PC-9 (cell line): ENCODE measurements at regions of chr2 and their contacts with region 1.

Region 1: GRCh38 chr2:158723917-158724690 is 71.0 kb upstream of the DAPL1 start:
- DNase-seq: peak; percentile 71 to 95
- H3K4me3 ChIP-seq: peak overlapping the region; percentile 41; the same call in 1 of the 2 replicates
- H3K27ac ChIP-seq: peak overlapping the region; percentile 80
- H3K4me1 ChIP-seq: peaks cover 40% of the 10 kb centered on the region
- H3K27me3 ChIP-seq: no peaks in the 10 kb centered on the region
- CTCF ChIP-seq: peak; percentile 67

Region 2: DNA sequence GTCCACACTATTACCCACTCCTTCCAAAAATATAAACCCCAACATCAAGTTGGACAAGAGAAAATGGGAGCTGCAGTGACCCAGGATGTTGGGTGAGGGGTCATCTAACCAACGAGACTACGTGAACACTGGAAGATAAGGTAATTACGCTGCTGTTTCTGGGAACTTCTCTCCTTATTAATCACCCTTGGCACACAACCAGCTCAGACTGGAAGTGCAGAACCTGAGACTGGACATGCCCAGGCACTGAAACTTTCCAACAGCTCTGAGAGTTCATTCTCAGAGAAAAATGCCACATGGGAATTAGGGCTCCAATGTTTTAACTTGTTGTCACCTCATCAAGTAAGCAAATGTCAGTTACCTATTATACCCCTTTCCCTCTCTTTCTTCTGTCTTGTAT is 402.8 kb before region 1 on chr2:
- CTCF ChIA-PET with region 1: no interaction called
- POLR2A ChIA-PET with region 1: no interaction called
- intact Hi-C with region 1: no loop called
- DNase-seq: no peak
- H3K4me3 ChIP-seq: no peak overlapping the region
- H3K27ac ChIP-seq: no peak overlapping the region
- H3K4me1 ChIP-seq: no peaks in the 10 kb centered on the region
- H3K27me3 ChIP-seq: no peaks in the 10 kb centered on the region
- CTCF ChIP-seq: no peak

Region 3: GRCh38 chr2:158735820-158736580 is 11.9 kb after region 1 on chr2:
- CTCF ChIA-PET with region 1: interaction called, 10 read pairs
- POLR2A ChIA-PET with region 1: interaction called, 14 read pairs
- intact Hi-C with region 1: no loop called
- DNase-seq: peak in 1 of 2 experiments; percentile 83
- H3K4me3 ChIP-seq: no peak overlapping the region
- H3K27ac ChIP-seq: peak overlapping the region; percentile 76
- H3K4me1 ChIP-seq: peaks cover 32% of the 10 kb centered on the region
- H3K27me3 ChIP-seq: no peaks in the 10 kb centered on the region
- CTCF ChIP-seq: no peak

Region 4: GRCh38 chr2:158745044-158745865 is 21.2 kb after region 1 on chr2:
- CTCF ChIA-PET with region 1: interaction called, 10 read pairs
- POLR2A ChIA-PET with region 1: no interaction called
- intact Hi-C with region 1: no loop called
- DNase-seq: peak in 1 of 2 experiments; percentile 35
- H3K4me3 ChIP-seq: no peak overlapping the region
- H3K27ac ChIP-seq: no peak overlapping the region
- H3K4me1 ChIP-seq: no peaks in the 10 kb centered on the region
- H3K27me3 ChIP-seq: no peaks in the 10 kb centered on the region
- CTCF ChIP-seq: peak; percentile 65

Region 5: GRCh38 chr2:158914731-158915130 is 190.6 kb after region 1 on chr2:
- CTCF ChIA-PET with region 1: no interaction called
- POLR2A ChIA-PET with region 1: no interaction called
- intact Hi-C with region 1: no loop called
- DNase-seq: no peak
- H3K4me3 ChIP-seq: no peak overlapping the region
- H3K27ac ChIP-seq: no peak overlapping the region
- H3K4me1 ChIP-seq: no peaks in the 10 kb centered on the region
- H3K27me3 ChIP-seq: no peaks in the 10 kb centered on the region
- CTCF ChIP-seq: no peak